Prostate gland (tissue), 2 donors: ENCODE measurements at regions of chr3 and their contacts with region 1.

Region 1: GRCh38 chr3:119676771-119677640 is at the start of gene COX17:
- DNase-seq: peak; percentile 96
- H3K4me3 ChIP-seq: peak within 1 kb of the TSS; percentile 62 to 75
- H3K27ac ChIP-seq: peak within 1 kb of the TSS; percentile 84 to 88
- H3K4me1 ChIP-seq: peaks cover 10% of the 10 kb centered on the region
- H3K27me3 ChIP-seq: no peaks in the 10 kb centered on the region
- CTCF ChIP-seq: no peak
- POLR2A ChIP-seq: peak; percentile 59
- total RNA-seq, gene COX17: 26.4 to 29.5 TPM

Region 2: DNA sequence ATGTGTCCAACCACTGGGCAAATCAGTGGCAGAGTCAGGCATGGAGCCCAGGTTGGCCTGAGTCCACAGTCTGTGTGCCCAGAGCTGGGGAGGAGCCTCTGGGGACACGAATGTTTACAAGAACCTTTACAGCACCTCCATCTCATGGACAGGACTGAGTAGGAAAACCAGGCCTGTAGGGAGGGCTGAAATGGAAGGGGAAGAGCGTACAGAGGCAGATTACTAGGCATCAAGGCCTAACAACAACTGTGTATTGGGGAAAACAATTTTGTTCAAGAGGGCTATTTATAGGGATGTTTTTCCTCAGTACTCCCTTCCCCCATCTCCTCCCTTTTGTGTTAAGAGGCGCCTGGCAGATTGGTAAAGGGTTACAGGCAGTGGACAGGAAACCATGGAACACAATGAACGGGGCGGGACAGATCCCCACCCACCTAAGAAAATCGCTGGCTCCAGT is 397.9 kb before region 1 on chr3:
- intact Hi-C with region 1: loop called (anchors 10 kb)
- DNase-seq: peak; percentile 57
- H3K4me3 ChIP-seq: no peak overlapping the region
- H3K27ac ChIP-seq: peak overlapping the region in 1 of 2 donors; percentile 31
- H3K4me1 ChIP-seq: no peaks in the 10 kb centered on the region
- H3K27me3 ChIP-seq: no peaks in the 10 kb centered on the region
- CTCF ChIP-seq: no peak
- POLR2A ChIP-seq: no peak

Region 3: DNA sequence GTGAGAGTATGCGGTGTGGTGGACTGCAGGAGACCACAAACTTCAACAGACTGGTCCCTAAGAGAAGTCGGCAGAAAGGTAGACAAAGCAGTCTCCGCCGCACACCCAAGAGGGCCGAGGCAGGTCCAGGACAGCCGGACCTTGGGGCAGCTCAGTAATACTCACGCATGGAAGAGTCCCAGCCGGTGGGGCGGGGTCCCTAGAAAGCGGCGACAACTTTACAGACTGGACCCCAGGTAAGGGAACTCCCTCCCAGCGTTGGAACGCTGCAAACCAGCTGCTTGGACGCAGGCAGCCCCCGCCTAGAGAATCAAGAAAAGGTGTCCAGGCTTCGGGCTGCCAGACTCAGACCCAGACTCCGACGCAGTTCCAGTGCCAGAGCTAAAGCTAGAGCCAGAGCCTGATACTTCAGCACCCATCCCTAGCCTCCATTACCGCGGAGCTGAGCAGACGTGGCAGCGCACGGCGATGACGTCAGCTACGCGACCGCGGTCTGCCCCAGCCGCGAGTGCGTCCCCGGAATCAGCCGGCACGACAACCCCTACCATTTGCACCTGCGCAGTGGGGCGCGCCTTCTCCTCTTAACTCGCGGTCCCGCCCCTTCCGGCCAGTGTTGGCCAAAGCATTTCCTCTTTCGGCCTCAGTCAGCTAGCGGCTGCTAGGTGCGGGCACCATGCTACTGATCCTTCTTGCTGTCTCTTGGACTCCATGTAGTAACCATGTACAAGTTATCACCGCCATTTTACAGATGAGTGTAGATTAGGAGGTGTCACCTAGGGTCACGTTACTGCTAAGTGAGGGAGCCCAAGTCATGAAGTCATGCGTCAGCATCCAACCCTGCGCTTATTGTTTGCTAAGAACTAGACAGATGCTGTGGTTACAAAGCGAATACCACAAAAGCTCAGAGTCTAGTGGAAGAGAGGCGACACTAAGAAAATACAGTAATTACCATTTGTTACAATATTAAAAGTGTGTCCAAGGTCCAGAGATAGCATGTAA is 213.5 kb before region 1 on chr3 and contains the start of gene TMEM39A:
- intact Hi-C with region 1: loop called (anchors 5 kb)
- DNase-seq: peak; percentile 99
- H3K4me3 ChIP-seq: peak within 1 kb of the TSS; percentile 67 to 78
- H3K27ac ChIP-seq: peak within 1 kb of the TSS; percentile 68 to 76
- H3K4me1 ChIP-seq: peaks cover 5% of the 10 kb centered on the region
- H3K27me3 ChIP-seq: no peaks in the 10 kb centered on the region
- CTCF ChIP-seq: peak in 2 of 4 experiments; percentile 43 to 54
- POLR2A ChIP-seq: peak; percentile 83
- total RNA-seq, gene TMEM39A: 20.6 to 72.0 TPM

Region 4: DNA sequence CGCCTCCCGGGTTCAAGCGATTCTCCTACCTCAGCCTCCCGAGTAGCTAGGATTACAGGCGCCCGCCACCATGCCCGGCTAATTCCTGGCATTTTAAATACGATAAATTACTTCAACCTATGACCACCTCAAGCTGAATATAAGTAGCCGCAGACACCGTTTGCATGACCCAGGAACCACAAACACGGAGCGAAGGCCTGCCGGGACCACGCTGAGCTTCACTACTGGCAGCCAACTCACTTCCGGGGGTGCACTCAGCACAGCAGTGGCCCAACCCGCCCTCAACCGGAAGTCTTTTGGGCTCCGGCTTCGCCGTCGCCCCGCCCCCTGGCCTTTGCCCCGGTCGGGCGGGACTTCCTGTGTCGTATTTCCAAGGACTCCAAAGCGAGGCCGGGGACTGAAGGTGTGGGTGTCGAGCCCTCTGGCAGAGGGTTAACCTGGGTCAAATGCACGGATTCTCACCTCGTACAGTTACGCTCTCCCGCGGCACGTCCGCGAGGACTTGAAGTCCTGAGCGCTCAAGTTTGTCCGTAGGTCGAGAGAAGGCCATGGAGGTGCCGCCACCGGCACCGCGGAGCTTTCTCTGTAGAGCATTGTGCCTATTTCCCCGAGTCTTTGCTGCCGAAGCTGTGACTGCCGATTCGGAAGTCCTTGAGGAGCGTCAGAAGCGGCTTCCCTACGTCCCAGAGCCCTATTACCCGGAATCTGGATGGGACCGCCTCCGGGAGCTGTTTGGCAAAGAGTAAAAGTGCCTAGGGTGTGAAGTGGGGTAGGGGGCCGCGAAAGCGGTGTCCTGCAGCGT is 178.6 kb before region 1 on chr3 and contains the start of gene TIMMDC1:
- intact Hi-C with region 1: loop called (anchors 10 kb)
- DNase-seq: peak; percentile 97
- H3K4me3 ChIP-seq: peak within 1 kb of the TSS; percentile 89 to 93
- H3K27ac ChIP-seq: peak within 1 kb of the TSS; percentile 84 to 94
- H3K4me1 ChIP-seq: no peaks in the 10 kb centered on the region
- H3K27me3 ChIP-seq: no peaks in the 10 kb centered on the region
- CTCF ChIP-seq: no peak
- POLR2A ChIP-seq: peak; percentile 64
- total RNA-seq, gene TIMMDC1: 65.7 to 67.7 TPM

Region 5: GRCh38 chr3:119524931-119525662 is 151.9 kb before region 1 on chr3:
- intact Hi-C with region 1: loop called (anchors 10 kb)
- DNase-seq: no peak
- H3K4me3 ChIP-seq: no peak overlapping the region
- H3K27ac ChIP-seq: no peak overlapping the region
- H3K4me1 ChIP-seq: no peaks in the 10 kb centered on the region
- H3K27me3 ChIP-seq: no peaks in the 10 kb centered on the region
- CTCF ChIP-seq: peak in 2 of 4 experiments; percentile 32 to 52
- POLR2A ChIP-seq: no peak

Region 6: DNA sequence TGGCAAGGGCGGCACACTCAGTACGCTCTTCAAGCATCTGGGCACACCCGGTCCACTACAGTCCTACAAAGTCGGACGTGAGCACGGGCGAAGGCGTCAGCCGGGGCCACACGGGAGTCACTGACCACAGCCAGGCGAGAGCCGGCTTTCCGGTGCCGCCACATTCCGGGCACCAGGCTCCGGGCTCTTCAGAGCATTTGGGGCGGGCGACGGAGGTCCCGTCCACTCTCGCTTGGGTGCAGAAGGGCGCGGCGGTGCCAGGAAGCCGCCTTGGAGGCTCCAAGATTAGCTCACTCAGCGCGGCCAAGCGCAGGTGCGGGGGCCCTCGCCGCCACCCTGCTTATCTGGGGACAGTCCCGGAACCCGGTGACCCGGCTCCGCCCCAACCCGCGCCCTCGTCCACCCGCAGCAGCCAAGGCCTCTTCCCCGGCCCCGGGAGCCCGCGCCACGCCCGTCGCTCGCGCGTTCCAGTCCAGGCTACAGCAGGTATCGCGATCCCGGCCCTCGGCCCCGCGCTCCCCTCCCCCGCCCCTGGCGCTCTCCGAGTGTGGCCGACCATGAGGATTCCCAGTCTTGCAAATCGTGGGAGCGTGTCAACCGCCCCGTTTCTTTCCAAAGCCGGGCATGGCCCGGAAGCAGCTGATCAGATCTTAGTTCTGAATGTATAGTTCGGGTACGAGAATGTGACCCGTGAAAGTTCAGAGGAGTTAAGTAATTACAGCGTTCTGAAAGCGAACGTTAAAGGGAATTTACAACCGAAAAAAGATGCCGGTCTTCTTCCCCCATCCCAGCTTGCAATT is 97.4 kb before region 1 on chr3 and contains the start of gene ADPRH:
- intact Hi-C with region 1: no loop called
- DNase-seq: peak; percentile 57
- H3K4me3 ChIP-seq: peak within 1 kb of the TSS; percentile 53 to 58
- H3K27ac ChIP-seq: peak within 1 kb of the TSS; percentile 87 to 89
- H3K4me1 ChIP-seq: no peaks in the 10 kb centered on the region
- H3K27me3 ChIP-seq: no peaks in the 10 kb centered on the region
- CTCF ChIP-seq: no peak
- POLR2A ChIP-seq: peak; percentile 18
- total RNA-seq, gene ADPRH: 8.2 to 14.8 TPM

Region 7: DNA sequence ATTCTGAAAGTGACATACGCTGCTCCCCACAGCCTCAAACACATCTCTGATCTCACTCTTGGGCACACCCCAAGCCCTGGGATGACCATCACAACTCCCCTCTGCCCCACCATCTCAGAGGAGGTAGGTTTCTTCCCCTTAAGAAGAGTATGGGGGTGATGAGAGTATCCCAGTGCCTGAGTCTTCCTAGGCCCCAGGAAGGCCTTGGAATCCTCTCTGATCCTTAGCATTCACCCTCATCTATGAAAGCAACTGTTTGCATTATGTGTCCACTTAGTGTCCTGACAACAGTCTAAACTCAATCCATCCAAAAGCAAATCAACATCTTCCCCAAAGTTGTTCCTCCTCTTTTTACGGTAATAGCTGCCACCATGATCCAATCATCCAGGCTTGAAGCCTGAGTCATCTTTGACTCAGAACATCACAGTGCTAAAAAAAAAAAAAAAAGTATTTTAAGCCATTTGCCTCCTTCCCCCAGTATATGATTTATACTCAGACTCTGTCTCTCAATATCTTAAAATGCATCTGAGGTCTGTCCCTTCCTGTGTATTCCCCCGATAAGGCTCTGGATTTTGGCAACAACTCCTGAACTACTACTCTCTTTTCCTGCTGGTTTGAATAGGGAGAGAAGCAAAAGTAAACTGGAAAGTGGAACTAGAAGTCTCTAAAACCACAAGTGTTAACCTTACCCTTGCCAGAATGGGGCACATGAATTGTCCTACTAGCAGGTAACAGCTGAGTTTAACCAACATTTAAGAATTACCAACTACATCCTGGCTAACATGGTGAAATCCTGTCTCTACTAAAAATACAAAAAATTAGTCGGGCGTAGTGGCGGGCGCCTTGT is 39.1 kb before region 1 on chr3:
- intact Hi-C with region 1: loop called (anchors 5 kb)
- DNase-seq: no peak
- H3K4me3 ChIP-seq: no peak overlapping the region
- H3K27ac ChIP-seq: peak overlapping the region; percentile 43 to 54
- H3K4me1 ChIP-seq: no peaks in the 10 kb centered on the region
- H3K27me3 ChIP-seq: no peaks in the 10 kb centered on the region
- CTCF ChIP-seq: no peak
- POLR2A ChIP-seq: no peak

Region 8: GRCh38 chr3:120348981-120349818 is 672.2 kb after region 1 on chr3 and contains the start of gene LRRC58:
- intact Hi-C with region 1: no loop called
- DNase-seq: peak; percentile 87
- H3K4me3 ChIP-seq: peak within 1 kb of the TSS; percentile 59 to 78
- H3K27ac ChIP-seq: peak within 1 kb of the TSS; percentile 83 to 94
- H3K4me1 ChIP-seq: no peaks in the 10 kb centered on the region
- H3K27me3 ChIP-seq: no peaks in the 10 kb centered on the region
- CTCF ChIP-seq: peak in 2 of 4 experiments; percentile 28 to 32
- POLR2A ChIP-seq: peak; percentile 82
- total RNA-seq, gene LRRC58: 26.0 to 34.9 TPM